Activated CD4-positive, alpha-beta T cell treated with anti-CD3 and anti-CD28 coated beads for 36 hours (primary cell): ENCODE measurements at regions of chr11 and their contacts with region 1.

Region 1: DNA sequence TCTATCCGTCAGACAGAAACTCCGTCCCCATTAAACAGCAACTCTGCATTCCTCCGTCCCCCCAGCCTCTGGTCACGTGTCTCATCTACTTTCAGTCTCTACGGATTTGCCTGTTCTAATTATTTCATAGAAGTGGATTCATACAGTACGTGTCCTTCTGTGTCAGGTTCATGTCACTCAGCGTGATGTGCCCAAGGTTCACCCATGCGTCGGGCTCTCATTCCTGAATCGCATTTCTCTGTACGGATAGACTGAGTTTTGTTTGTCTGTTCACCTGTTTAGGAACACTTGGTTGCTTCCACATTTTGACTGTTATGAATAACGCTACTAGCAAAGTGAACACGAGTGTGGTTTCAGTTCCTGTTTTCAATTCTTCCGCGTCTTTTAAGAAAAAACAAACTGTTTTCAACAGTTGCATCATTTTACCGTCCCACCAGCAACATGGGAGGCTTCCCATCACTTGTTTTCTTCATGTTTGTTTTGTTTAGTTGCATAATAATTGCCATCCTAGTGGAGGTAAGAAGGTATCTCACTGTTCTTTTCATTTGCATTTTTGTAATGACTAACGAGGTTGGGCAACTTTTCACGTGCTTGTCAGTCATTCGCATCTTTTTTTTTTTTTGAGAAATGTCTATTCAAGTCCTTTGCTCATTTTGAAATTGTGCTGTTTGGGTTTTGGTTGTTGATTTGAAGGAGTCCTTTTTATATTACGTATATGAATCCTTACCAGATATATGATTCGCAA is 8.9 kb upstream of the NLRP6 start:
- DNase-seq: peak; percentile 72
- ATAC-seq: peak; percentile 71
- H3K4me3 Mint-ChIP-seq: peak overlapping the region; percentile 79
- H3K27ac Mint-ChIP-seq: peak overlapping the region; percentile 99
- H3K4me1 Mint-ChIP-seq: peaks cover 43% of the 10 kb centered on the region
- H3K27me3 Mint-ChIP-seq: no peaks in the 10 kb centered on the region

Region 2: DNA sequence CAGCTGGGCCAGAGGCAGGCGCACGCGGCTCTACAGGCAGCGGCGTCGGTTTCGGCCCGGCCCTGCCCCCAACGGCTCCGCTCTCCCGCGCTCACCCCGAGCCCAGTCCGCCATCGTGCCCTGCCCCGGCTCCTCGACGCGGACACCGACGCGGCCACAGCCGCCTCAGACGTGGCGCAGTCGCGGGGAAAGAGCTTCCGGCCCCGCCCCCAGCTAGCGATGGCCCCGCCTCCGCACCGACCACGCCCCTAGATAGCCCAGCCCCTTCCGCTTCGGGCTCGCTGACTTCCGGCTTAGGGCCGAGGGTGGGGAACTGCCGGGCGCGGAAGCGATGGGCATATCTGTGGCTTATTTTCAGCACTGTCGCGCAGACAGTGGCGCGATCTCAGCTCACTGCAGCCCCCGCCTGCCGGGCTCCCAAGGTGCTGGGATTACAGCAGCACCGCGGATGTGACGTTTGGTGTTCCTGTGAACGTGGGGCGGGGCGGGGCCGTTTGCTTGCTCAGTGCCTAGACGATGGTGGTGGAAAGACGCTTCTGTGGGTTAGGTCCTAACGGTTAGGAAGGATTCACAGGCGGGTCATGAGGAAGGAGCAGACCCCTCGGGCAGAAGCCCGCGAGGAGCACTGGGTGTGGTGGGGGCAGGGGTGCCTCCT is 62.0 kb before region 1 on chr11 and contains the starts of genes BET1L and RIC8A:
- CTCF ChIA-PET with region 1: no interaction called
- POLR2A ChIA-PET with region 1: no interaction called
- intact Hi-C with region 1: loop called in 1 of 2 experiments (anchors 1 kb)
- DNase-seq: peak; percentile 99
- ATAC-seq: peak; percentile 89
- H3K4me3 Mint-ChIP-seq: peak within 1 kb of the TSS; percentile 94
- H3K27ac Mint-ChIP-seq: peak within 1 kb of the TSS; percentile 99
- H3K4me1 Mint-ChIP-seq: peaks cover 56% of the 10 kb centered on the region
- H3K27me3 Mint-ChIP-seq: no peaks in the 10 kb centered on the region
- total RNA-seq, gene BET1L: 45.5 to 49.4 TPM
- total RNA-seq, gene RIC8A: 104 to 124 TPM

Region 3: DNA sequence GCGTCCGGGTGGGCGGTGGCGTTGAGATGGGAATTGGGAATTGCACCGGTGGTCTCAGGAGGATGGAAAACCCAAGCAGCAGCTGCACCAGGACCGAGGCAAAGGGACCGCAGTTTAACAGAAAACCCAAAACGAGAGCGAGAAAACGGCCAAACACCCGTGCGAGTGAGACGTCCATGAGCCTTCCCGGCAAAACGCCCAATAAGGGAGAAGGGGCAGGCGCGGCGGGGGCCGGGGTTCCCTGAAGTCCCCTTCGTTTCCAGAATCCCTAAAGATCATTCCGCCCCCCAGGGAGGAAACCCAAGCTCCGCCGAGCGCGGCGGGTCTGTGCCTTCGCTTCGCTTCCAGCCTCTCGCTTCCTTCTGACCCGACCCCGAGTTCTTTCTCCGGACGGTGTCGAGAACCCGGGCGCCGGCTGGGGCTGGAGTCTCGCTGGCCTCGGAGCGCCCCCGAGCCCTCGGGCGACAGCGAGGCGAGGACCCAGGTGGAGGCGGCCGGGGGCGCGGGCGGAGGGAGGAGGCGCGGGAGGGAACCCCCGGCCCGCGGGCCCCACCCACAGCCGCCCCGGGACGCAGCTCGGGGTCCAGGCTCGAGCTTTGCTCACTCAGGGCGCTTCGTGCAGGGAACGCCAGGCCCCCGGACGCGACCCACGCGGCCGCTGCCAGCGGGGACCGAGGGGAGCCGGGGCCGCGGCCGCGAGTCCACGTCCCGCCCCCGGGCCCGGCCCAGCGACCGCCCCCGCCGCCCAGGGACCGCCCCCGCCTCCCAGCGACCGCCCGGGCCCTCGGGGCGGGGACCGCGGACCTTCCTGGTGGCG is 19.2 kb after region 1 on chr11 and contains the start of gene PGGHG:
- CTCF ChIA-PET with region 1: interaction called, 3 read pairs
- POLR2A ChIA-PET with region 1: no interaction called
- intact Hi-C with region 1: loop called (anchors 1 kb)
- DNase-seq: peak; percentile 62
- ATAC-seq: peak; percentile 17
- H3K4me3 Mint-ChIP-seq: peak within 1 kb of the TSS; percentile 83
- H3K27ac Mint-ChIP-seq: peak within 1 kb of the TSS; percentile 92
- H3K4me1 Mint-ChIP-seq: peaks cover 29% of the 10 kb centered on the region
- H3K27me3 Mint-ChIP-seq: no peaks in the 10 kb centered on the region
- total RNA-seq, gene PGGHG: 73.4 to 82.3 TPM

Region 4: GRCh38 chr11:355581-356458 is 86.5 kb after region 1 on chr11:
- CTCF ChIA-PET with region 1: no interaction called
- POLR2A ChIA-PET with region 1: no interaction called
- intact Hi-C with region 1: loop called in 1 of 2 experiments (anchors 1 kb)
- DNase-seq: peak; percentile 94
- ATAC-seq: peak; percentile 63
- H3K4me3 Mint-ChIP-seq: no peak overlapping the region
- H3K27ac Mint-ChIP-seq: peak overlapping the region; percentile 96
- H3K4me1 Mint-ChIP-seq: peaks cover 47% of the 10 kb centered on the region
- H3K27me3 Mint-ChIP-seq: no peaks in the 10 kb centered on the region

Region 5: GRCh38 chr11:798093-798713 is 528.9 kb after region 1 on chr11 and contains the start of gene SLC25A22:
- CTCF ChIA-PET with region 1: no interaction called
- POLR2A ChIA-PET with region 1: no interaction called
- intact Hi-C with region 1: loop called in 1 of 2 experiments (anchors 1 kb)
- DNase-seq: peak; percentile 92
- ATAC-seq: peak; percentile 63
- H3K4me3 Mint-ChIP-seq: peak within 1 kb of the TSS; percentile 79
- H3K27ac Mint-ChIP-seq: peak within 1 kb of the TSS; percentile 67
- H3K4me1 Mint-ChIP-seq: peaks cover 13% of the 10 kb centered on the region
- H3K27me3 Mint-ChIP-seq: no peaks in the 10 kb centered on the region
- total RNA-seq, gene SLC25A22: 33.9 to 36.6 TPM

Region 6: GRCh38 chr11:1103401-1104325 is 834.3 kb after region 1 on chr11:
- CTCF ChIA-PET with region 1: no interaction called
- POLR2A ChIA-PET with region 1: no interaction called
- intact Hi-C with region 1: no loop called
- DNase-seq: no peak
- ATAC-seq: no peak
- H3K4me3 Mint-ChIP-seq: no peak overlapping the region
- H3K27ac Mint-ChIP-seq: no peak overlapping the region
- H3K4me1 Mint-ChIP-seq: no peaks in the 10 kb centered on the region
- H3K27me3 Mint-ChIP-seq: no peaks in the 10 kb centered on the region